AG04450 (cell line): ENCODE measurements at regions of chr17 and their contacts with region 1.

Region 1: DNA sequence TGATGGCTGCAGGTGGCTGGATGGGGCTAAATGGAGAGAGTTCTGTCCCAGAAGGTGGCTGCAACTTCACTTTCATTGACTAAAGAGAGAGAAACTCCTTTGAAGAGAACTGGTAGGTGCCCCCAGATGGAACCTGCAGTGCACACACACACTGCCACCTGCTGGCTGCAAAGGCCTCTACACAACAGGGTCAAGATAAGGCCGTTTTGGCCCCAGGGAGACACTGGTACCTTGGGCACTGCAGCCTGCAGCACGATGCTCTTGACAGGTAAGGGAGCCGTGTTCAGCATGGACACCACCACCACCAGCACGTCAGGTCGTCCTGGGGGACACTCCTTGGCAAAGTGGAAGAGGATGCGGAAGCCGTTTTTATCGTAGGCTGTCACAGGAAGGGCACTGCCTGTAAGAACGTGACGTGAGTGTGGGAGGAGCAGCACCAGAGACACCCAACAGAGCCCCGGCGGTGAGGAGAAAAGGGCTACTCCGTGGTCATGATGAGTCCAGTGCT is 22.7 kb downstream of the GGA3 start:
- DNase-seq: peak; percentile 43
- H3K4me3 ChIP-seq: no peak overlapping the region
- H3K27ac ChIP-seq: no peak overlapping the region
- H3K27me3 ChIP-seq: no peaks in the 10 kb centered on the region
- CTCF ChIP-seq: peak; percentile 92

Region 2: GRCh38 chr17:75250009-75250471 is 11.3 kb after region 1 on chr17:
- CTCF ChIA-PET with region 1: interaction called, 16 read pairs
- POLR2A ChIA-PET with region 1: interaction called, 3 read pairs
- DNase-seq: no peak
- H3K4me3 ChIP-seq: no peak overlapping the region
- H3K27ac ChIP-seq: no peak overlapping the region
- H3K27me3 ChIP-seq: no peaks in the 10 kb centered on the region
- CTCF ChIP-seq: no peak

Region 3: DNA sequence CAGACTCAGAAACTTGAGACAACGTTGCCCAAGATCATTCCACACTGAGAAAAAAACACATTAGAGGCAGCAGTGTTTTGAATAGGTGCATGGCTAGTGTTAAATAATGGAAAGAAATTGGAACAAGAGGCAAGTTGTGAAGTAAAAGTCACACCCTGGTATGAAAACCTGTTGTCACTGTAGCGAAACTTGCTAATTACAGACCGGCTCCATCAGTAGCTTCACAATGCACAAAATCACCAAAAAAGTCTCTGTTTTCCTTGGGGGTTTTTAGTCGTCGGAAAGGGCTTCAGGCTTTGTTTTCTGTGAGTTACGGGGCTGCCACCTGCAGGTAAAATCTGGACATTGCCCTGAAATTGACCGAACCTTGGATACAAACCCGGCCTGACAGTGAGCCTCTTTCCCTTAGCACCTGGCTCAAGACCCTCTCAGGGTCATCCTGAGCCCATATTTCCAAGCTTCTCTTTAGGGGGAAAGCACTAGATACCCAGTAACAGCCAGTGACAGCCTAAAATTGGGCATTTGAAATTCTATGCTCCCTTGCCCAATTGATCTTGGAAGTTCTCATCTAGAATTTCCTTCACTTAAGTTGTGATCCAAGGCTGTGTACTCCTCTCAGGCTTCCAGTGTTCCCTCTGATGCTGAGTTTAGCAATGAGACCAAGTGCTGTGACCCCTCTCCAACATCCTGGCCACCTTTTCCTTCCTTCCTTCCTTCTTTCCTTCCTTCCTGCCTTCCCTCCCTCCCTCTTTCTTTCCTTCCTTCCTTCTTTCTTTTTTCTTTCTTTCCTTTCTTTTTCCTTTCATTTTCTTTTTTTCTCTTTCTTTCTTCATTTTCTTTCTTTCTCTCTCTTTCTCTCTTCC is 173.9 kb after region 1 on chr17:
- CTCF ChIA-PET with region 1: interaction called, 14 read pairs
- POLR2A ChIA-PET with region 1: interaction called, 13 read pairs
- DNase-seq: peak; percentile 46
- H3K4me3 ChIP-seq: no peak overlapping the region
- H3K27ac ChIP-seq: no peak overlapping the region
- H3K27me3 ChIP-seq: peaks cover 13% of the 10 kb centered on the region
- CTCF ChIP-seq: peak; percentile 87